Activated naive CD8-positive, alpha-beta T cell treated with anti-CD3 and anti-CD28 coated beads, Interleukin-2, amount 10 ng/mL, durations not matched to agents 7 days and 5 days (primary cell): ENCODE measurements at regions of chr3 and their contacts with region 1.

Region 1: DNA sequence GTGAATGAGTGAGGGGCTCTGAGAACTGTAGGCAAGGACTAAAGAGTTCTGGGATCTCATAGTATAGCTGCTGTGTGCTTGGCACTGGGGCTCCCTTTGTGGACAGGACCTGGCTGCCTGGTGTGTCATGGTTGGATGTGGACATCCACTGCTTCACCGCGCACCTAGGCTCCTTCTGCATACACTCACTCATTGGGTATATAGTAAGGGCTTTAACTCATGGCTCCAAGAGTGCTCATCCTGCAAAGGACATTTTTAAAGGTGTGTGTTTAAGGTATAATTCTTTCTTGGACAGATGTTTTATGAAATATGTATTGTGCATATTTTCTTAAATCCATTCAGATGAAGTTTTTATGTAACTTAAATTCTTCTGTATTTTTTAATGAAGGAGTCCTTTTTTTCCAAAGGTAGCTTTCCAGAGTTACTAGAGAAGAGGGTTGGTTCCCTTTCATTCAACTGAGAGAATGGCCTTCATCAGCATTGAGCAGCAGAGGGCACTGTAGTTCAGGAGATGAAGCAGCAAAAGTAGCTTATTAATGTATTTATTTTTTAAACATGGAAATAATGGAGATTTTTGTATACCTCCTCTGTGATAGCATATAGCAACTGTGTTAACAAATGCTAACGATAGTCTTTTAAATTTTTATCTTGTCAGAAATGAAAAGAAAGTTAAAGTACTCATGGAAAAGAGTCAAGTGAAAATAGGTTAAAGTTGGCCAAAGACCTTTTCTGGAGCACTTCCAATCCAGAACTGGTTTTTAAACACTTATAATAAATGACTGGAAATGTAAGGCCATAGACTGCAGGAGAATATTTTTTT is 25.2 kb downstream of the OXNAD1 start:
- DNase-seq: no peak
- ATAC-seq: no peak
- H3K4me3 Mint-ChIP-seq: peak overlapping the region; percentile 97
- H3K27ac Mint-ChIP-seq: peak overlapping the region; percentile 97
- H3K4me1 Mint-ChIP-seq: peaks cover 53% of the 10 kb centered on the region
- H3K27me3 Mint-ChIP-seq: no peaks in the 10 kb centered on the region

Region 2: GRCh38 chr3:16264708-16265454 is 25.3 kb before region 1 on chr3 and contains the starts of genes DPH3 and OXNAD1:
- POLR2A ChIA-PET with region 1: interaction called, 20 read pairs
- DNase-seq: peak; percentile 99
- ATAC-seq: peak; percentile 96
- H3K4me3 Mint-ChIP-seq: peak within 1 kb of the TSS; percentile 97
- H3K27ac Mint-ChIP-seq: peak within 1 kb of the TSS; percentile 96
- H3K4me1 Mint-ChIP-seq: peaks cover 27% of the 10 kb centered on the region
- H3K27me3 Mint-ChIP-seq: no peaks in the 10 kb centered on the region
- total RNA-seq, gene DPH3: 12.1 to 14.9 TPM
- total RNA-seq, gene OXNAD1: 76.8 to 77.1 TPM

Region 3: DNA sequence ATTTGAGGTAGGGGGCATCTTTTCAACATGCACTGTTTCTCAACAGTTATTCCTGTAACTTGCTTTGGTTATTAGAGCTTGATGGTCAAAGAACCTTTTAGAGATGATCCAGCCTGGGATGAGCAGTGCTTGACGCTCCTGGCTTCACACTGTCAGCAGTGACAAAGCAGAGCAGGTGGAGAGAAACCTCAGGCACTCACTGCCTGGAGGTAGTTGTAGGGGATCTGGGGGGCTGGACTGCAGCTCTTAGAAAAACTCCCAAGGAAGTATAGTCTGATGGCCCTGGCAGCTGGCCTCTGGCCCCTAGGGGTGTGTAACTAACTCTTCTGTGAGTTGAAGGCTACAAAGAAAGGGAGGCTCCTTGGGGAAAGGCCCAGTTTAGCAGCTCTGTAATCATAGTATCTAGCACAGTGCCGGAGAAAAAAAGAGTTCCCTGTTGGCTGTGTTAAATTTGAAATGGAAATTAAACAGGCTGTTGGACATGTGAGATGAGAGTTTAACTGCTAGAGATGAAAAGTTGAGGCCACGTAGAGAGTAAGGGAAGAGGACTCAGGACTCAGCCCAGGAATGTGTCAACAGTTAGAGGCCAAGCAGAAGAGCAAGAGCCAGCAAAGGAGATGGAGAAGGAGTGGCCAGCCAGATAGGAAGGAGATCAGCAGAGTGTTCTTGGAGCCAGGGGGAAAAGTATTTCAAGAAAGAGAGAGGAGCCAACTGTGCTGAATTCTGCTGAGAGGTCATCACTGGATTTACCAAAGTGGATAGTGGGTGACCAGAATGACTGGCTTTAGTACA is 11.0 kb before region 1 on chr3:
- POLR2A ChIA-PET with region 1: no interaction called
- DNase-seq: no peak
- ATAC-seq: no peak
- H3K4me3 Mint-ChIP-seq: no peak overlapping the region
- H3K27ac Mint-ChIP-seq: no peak overlapping the region
- H3K4me1 Mint-ChIP-seq: peaks cover 7% of the 10 kb centered on the region
- H3K27me3 Mint-ChIP-seq: no peaks in the 10 kb centered on the region

Region 4: DNA sequence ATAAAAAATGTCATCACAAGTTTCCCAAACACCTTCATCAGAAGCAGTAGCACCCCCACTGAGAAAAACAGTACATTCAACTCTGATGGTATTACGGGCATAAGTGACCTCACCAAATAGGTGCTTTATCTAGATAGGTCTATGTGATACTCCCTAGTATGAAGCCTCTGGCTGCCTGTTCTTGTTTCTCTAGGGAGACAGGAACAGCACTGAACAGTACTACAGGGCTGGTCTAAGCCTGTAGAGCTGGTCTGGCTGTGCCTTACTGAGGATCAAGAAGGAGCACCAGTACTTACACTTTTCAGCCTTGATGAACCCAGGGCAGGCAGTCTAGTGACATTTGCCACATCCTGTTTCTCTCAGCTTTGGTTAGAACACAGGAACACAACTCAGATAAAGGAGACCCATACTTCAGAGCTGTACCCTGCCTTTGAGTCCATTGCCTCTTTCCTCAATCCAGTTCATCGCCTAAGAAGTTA is 10.7 kb after region 1 on chr3:
- POLR2A ChIA-PET with region 1: interaction called, 71 read pairs
- DNase-seq: no peak
- ATAC-seq: peak; percentile 78
- H3K4me3 Mint-ChIP-seq: peak overlapping the region; percentile 92
- H3K27ac Mint-ChIP-seq: peak overlapping the region; percentile 92
- H3K4me1 Mint-ChIP-seq: peaks cover 81% of the 10 kb centered on the region
- H3K27me3 Mint-ChIP-seq: no peaks in the 10 kb centered on the region

Region 5: DNA sequence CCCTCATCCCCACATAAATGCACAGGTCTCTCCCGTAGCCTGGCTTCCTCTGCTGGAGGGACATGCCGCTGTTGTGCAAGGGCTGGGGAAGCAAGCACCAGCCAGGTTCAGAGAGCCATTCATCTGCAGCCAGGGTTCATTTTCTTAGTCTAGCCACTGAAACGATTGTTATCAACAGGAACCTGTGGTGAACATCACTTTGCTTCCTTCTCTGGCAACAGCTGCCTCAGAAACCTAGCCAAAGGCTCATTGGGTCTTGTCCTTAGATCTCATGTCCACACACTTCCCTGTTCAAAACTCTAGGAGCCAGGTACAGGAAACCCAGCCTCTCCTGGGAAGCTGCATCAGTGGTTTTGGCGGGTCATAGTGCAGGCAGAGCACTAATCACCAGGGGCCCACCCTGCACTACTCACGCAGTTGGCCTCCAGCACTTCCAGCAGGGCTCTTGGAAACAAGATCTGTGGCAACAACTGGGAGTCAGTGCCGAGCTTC is 21.8 kb after region 1 on chr3:
- POLR2A ChIA-PET with region 1: interaction called, 141 read pairs
- DNase-seq: peak; percentile 60
- ATAC-seq: peak; percentile 75
- H3K4me3 Mint-ChIP-seq: peak overlapping the region; percentile 73
- H3K27ac Mint-ChIP-seq: peak overlapping the region; percentile 86
- H3K4me1 Mint-ChIP-seq: peaks cover 82% of the 10 kb centered on the region
- H3K27me3 Mint-ChIP-seq: no peaks in the 10 kb centered on the region

Region 6: GRCh38 chr3:16402451-16402850 is 112.2 kb after region 1 on chr3:
- POLR2A ChIA-PET with region 1: no interaction called
- DNase-seq: no peak
- ATAC-seq: no peak
- H3K4me3 Mint-ChIP-seq: no peak overlapping the region
- H3K27ac Mint-ChIP-seq: no peak overlapping the region
- H3K4me1 Mint-ChIP-seq: peaks cover 8% of the 10 kb centered on the region
- H3K27me3 Mint-ChIP-seq: no peaks in the 10 kb centered on the region

Region 7: DNA sequence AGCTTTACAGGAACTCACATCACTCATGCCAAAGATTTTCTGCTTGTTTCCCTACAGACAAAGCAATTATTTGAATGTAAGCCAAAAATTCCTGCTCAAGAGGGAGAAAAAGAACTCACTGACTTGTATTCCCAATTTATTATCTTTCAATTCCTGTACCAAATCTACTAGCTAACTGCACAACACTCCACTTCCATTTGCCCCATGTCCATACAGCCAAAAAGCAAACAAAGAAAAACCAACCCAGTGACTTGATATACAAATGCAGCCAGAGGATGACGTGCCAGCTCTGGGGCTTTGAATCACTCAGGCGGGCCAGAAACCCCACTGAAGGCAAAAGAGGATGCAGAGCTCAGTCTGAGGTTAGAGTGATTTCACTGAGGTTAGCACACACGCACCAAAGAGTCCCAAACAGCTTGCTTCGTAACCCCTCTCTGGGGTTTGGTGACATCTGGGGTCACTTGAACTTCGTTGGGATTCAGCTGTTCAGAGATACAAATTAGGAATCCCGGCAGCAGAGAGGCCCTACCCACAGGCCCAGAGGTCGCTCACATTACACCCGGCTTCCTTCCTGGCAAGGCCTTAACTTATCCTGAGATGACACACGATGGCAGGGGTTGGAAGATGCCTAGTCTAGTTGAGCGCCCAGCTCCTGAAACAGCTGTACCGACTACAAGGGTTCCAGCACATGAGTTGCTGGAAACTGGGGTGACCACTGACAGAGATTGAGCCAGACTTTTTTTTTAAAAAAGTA is 221.6 kb after region 1 on chr3:
- POLR2A ChIA-PET with region 1: interaction called, 17 read pairs
- DNase-seq: peak; percentile 68
- ATAC-seq: peak; percentile 69
- H3K4me3 Mint-ChIP-seq: peak overlapping the region; percentile 79
- H3K27ac Mint-ChIP-seq: peak overlapping the region; percentile 87
- H3K4me1 Mint-ChIP-seq: peaks cover 67% of the 10 kb centered on the region
- H3K27me3 Mint-ChIP-seq: no peaks in the 10 kb centered on the region

Region 8: DNA sequence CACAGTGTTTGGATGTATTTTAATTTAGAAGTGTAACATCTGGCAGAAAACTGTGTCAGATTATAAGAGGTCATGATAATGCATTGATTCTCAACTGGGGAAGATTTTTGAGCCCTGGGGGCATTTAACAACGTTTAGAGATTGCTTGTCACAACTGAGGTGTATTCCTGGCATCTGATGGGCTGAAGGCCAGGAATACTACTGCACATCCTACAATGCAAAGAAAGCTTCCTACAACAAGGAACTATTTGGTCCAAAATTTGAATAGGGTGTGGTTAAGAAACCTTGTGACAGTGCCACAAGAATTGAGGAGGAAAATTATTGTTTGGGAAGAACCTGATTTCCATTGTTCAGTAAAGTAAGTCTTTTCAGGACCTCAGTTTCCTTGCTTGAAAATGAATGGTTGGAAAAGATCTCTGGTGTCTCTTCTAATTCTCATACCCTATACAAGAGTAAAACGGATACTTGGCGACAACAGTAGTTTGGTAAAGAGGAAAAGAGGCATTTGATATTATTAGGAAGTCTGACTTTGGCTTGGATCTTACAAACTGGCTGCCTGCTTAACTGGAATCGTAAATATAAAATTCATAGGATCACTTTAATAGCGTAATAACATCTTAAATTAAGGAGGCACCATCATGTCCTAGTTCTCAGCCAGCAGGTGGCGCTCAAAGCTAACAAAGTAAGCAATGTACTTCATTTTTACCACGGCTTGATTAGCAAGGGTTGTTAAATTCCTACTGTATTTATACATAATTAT is 310.7 kb after region 1 on chr3:
- POLR2A ChIA-PET with region 1: no interaction called
- DNase-seq: peak; percentile 66
- ATAC-seq: no peak
- H3K4me3 Mint-ChIP-seq: no peak overlapping the region
- H3K27ac Mint-ChIP-seq: no peak overlapping the region
- H3K4me1 Mint-ChIP-seq: peaks cover 21% of the 10 kb centered on the region
- H3K27me3 Mint-ChIP-seq: peaks cover 24% of the 10 kb centered on the region